ENCODE measurements at regions of chr12 and their contacts with region 1.

Region 1: DNA sequence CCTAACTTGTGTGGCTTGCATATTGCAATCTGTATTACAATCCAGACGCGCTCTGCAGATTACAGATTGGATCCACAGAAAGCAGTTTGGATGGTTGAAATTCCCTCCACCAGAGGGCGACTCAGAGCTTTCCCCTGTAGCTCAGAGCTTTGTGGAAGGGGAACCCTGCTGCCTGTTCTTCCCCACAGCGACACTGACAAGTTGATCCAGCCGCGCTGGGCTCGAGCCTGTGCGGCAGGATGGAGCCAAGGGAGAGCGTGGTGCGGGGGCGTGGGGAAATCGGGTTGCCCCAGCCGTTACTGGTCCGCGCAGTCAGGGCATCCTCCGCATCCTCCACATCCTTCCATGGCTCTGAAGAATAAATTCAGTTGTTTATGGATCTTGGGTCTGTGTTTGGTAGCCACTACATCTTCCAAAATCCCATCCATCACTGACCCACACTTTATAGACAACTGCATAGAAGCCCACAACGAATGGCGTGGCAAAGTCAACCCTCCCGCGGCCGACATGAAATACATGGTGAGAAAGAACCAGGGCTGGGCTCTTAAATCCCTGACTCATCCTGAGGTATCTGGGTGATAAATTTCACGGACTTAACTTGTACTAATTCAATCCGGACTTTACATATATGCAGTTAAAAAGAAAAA is at the start of gene GLIPR1L1:
- DNase-seq: peak; percentile 89
- H3K4me3 ChIP-seq: peak within 1 kb of the TSS in 7 of 8 donors; percentile 6 to 64 (median 28)
- H3K27ac ChIP-seq: peak within 1 kb of the TSS in 2 of 8 donors; percentile 28 to 34
- H3K4me1 ChIP-seq: peaks cover 0 to 27% (median 19%) of the 10 kb centered on the region in 6 donors
- H3K27me3 ChIP-seq: peaks cover 0 to 15% (median 0%) of the 10 kb centered on the region in 7 donors
- CTCF ChIP-seq: peak; percentile 53 to 90 (median 82)
- POLR2A ChIP-seq: no peak
- total RNA-seq, gene GLIPR1L1: not detected

Region 2: DNA sequence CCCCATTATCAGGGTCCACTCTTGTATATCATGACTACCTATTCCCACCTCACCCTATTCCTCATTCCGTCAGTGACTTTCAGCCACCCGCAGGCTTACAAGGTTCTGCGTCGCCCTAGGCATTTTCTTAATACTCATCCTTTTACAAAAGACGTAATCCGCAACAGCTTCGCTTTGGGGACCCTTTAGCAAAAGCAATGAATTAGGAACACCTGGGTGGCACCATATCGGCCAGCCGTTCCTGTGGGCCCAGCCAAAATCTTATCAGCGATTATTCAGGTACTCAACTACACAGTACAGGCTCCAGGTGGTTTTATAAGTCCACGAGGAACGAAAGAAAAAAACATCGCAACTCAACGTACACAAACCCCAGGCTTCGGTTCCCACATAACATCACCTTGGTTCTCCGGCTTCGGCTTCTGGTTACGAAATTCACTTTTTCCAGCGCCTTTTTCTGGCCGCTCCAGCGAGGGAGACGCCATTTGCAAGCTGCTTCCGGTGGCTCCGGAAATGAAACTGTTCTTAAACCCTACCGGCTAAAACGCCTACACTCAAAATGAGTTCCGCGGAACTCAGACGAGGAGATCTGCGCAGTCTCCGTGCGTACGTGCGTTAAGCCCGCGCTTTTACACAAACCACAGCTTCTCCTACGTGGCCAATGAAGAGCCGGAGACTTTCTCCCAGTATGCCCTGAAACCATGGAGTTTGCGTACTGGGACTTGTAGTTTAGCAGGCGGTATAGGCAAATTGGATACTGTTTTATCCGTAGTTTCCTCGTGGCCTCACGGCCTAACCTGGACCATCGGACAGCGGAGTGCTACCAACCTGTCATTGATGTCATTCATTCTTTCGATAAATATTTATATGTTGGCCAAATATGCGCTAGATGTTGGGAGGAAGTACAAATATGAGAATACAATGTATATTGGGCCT is 176.9 kb after region 1 on chr12 and contains the start of gene KRR1:
- intact Hi-C with region 1: loop called (anchors 10 kb)
- DNase-seq: peak; percentile 95
- H3K4me3 ChIP-seq: peak within 1 kb of the TSS; percentile 37 to 94 (median 84)
- H3K27ac ChIP-seq: peak within 1 kb of the TSS; percentile 69 to 89 (median 86)
- H3K4me1 ChIP-seq: peaks cover 16 to 54% (median 33%) of the 10 kb centered on the region in 6 donors
- H3K27me3 ChIP-seq: no peaks in the 10 kb centered on the region
- CTCF ChIP-seq: peak in 5 of 11 experiments; percentile 21 to 49 (median 38)
- POLR2A ChIP-seq: peak in 1 of 3 donors; percentile 35
- total RNA-seq, gene KRR1: 26.4 to 51.2 (median 46.0) TPM

Measured in spleen (tissue), 13 donors.